ENCODE measurements at regions of chr5 and their contacts with region 1.

Region 1: DNA sequence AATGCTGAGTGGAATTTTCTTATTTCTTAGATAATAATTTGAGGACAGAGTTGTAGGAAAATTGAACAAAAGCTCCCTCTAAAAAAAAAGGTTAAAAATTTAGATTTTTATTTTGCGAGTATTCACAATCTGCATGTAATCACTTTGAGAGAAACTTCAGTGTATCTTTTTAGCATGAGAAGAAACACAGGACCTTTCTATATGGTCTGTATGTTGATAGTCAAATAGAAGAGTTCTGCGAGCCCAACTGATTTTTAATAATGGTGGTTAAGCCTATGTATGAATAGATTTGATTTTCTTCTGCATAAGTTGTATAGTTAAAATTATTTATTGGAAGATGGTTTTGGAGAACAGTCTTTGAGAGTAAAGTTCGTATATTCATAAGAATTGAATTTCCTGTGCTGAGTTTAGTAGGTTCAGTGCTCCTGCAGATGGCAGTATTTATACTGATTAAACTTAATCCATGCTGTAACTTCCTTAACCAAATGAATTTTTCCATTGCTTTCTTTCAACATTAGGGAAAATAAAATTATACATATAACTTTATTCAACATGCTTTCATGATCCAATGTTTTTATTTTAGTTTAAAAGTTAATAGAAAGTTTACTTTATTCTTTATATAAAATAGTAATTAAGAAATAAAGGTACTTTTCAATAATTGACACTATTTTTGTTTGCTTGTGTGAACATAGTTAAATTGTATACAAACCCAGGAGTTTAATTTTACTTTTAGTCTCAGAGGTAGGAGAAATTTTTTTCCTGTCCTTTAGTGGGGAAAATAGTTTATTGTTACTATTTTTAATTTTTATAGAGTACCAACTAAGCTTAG is 19.6 kb downstream of the TCERG1 start:
- DNase-seq: no peak
- ATAC-seq: no peak
- H3K4me3 ChIP-seq: no peak overlapping the region
- H3K27ac ChIP-seq: no peak overlapping the region
- H3K4me1 ChIP-seq: no peaks in the 10 kb centered on the region
- H3K27me3 ChIP-seq: no peaks in the 10 kb centered on the region
- CTCF ChIP-seq: 0 out of 2 replicates have a peak, but pooled peaks have one; percentile 11
- EP300 ChIP-seq: no peak
- POLR2A ChIP-seq: no peak
- RAD21 ChIP-seq: no peak

Region 2: GRCh38 chr5:145874765-145875164 is 592.0 kb before region 1 on chr5:
- CTCF ChIA-PET with region 1: no interaction called
- POLR2A ChIA-PET with region 1: no interaction called
- in situ Hi-C with region 1: no loop called
- intact Hi-C with region 1: no loop called
- DNase-seq: no peak
- ATAC-seq: no peak
- H3K4me3 ChIP-seq: no peak overlapping the region
- H3K27ac ChIP-seq: no peak overlapping the region
- H3K4me1 ChIP-seq: peaks cover 9% of the 10 kb centered on the region
- H3K27me3 ChIP-seq: no peaks in the 10 kb centered on the region
- CTCF ChIP-seq: no peak
- EP300 ChIP-seq: no peak
- POLR2A ChIP-seq: no peak
- RAD21 ChIP-seq: no peak

Region 3: DNA sequence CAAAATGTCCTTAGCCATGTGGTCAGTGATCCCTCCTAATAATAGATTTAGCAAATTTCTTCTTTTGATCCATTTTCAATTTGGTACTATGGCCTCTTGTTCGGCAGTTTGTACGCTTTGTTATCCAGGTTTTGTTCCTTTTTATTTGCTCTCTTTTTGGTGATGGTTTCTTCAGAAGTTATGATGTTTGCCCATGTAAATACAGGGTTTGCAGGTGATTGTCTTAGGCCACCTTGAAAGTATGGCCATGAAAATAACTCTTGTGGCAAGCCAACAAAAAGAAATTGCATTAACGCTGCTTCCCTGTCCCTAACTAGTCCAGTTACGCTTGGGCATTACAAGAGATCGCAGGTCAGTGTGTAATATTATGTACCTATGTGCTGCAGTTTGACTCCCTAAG is 40.7 kb after region 1 on chr5:
- CTCF ChIA-PET with region 1: no interaction called
- POLR2A ChIA-PET with region 1: no interaction called
- in situ Hi-C with region 1: no loop called
- intact Hi-C with region 1: loop called (anchors 1 kb)
- DNase-seq: no peak
- ATAC-seq: no peak
- H3K4me3 ChIP-seq: no peak overlapping the region
- H3K27ac ChIP-seq: no peak overlapping the region
- H3K4me1 ChIP-seq: no peaks in the 10 kb centered on the region
- H3K27me3 ChIP-seq: no peaks in the 10 kb centered on the region
- CTCF ChIP-seq: no peak
- EP300 ChIP-seq: no peak
- POLR2A ChIP-seq: no peak
- RAD21 ChIP-seq: no peak

Region 4: GRCh38 chr5:146533260-146533857 is 66.6 kb after region 1 on chr5:
- CTCF ChIA-PET with region 1: interaction called, 4 read pairs
- POLR2A ChIA-PET with region 1: no interaction called
- in situ Hi-C with region 1: no loop called
- intact Hi-C with region 1: loop called (anchors 2 kb)
- DNase-seq: peak; percentile 66
- ATAC-seq: peak; percentile 97
- H3K4me3 ChIP-seq: no peak overlapping the region
- H3K27ac ChIP-seq: no peak overlapping the region
- H3K4me1 ChIP-seq: no peaks in the 10 kb centered on the region
- H3K27me3 ChIP-seq: no peaks in the 10 kb centered on the region
- CTCF ChIP-seq: peak; percentile 89
- EP300 ChIP-seq: no peak
- POLR2A ChIP-seq: no peak
- RAD21 ChIP-seq: no peak

Measured in HepG2 (cell line).